Aorta (tissue), 5 donors: ENCODE measurements at regions of chr2 and their contacts with region 1.

Region 1: GRCh38 chr2:229273723-229274338 is 2.7 kb upstream of the PID1 start:
- DNase-seq: peak in 1 of 2 donors; percentile 51
- ATAC-seq: peak; percentile 79
- H3K4me3 ChIP-seq: peak overlapping the region in 1 of 2 donors; percentile 31
- H3K27ac ChIP-seq: no peak overlapping the region
- H3K4me1 ChIP-seq: no peaks in the 10 kb centered on the region
- H3K27me3 ChIP-seq: no peaks in the 10 kb centered on the region

Region 2: GRCh38 chr2:227884511-227884947 is 1389.3 kb before region 1 on chr2:
- intact Hi-C with region 1: loop called in 1 of 2 experiments (anchors 10 kb)
- DNase-seq: peak; percentile 75 to 86
- ATAC-seq: no peak
- H3K4me3 ChIP-seq: no peak overlapping the region
- H3K27ac ChIP-seq: no peak overlapping the region
- H3K4me1 ChIP-seq: peaks cover 1 to 4% of the 10 kb centered on the region in 2 donors
- H3K27me3 ChIP-seq: no peaks in the 10 kb centered on the region

Region 3: DNA sequence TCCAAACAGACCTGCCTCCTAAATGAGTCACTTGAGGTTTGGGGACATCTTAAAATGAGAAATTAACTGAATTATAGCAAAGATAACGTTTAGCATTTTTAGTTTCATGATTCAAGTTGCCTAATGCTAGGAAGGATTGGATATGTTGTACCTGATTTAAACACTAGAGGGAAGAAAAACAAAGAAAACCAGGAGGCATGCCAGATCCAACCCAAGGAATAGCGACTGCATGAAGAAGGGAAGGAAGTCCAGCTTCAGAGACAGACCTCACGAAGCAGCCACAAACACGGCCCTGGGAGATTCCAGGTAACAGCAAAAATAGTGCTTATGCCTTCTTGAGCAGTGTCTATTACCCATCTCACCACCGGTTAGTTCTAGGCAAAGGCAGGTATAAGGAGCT is 592.4 kb before region 1 on chr2:
- intact Hi-C with region 1: loop called (anchors 5 to 10 kb)
- DNase-seq: no peak
- ATAC-seq: peak; percentile 72
- H3K4me3 ChIP-seq: no peak overlapping the region
- H3K27ac ChIP-seq: no peak overlapping the region
- H3K4me1 ChIP-seq: peaks cover 0 to 2% of the 10 kb centered on the region in 2 donors
- H3K27me3 ChIP-seq: no peaks in the 10 kb centered on the region

Region 4: DNA sequence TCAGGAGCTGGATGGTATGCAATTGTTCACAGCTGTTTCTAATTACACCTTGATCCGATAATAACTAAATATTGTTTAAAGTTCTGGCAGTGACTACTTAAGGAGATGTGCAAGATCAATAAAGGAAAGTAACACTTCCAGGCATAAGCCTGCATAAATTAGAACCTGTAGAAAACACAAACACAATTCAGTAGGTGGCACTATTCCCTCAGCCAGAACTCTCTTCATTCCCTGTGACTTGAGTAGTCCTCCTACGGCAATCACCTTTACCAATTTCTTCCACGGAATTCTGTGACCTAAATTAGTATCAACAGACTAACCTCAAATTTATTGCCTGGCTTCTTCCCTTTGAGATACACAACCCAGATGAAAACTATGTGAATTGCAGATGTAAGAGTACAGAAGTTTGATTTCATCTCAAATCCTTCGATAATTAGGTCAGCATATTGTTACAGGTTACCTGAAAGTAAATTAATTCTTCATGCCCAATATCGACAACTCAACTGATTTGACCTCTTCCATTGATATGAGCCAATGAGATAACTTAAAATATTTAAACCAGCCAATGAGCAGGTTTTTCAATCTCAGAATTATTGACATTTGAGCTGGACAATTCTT is 140.6 kb before region 1 on chr2:
- intact Hi-C with region 1: loop called (anchors 2 to 5 kb)
- DNase-seq: no peak
- ATAC-seq: no peak
- H3K4me3 ChIP-seq: no peak overlapping the region
- H3K27ac ChIP-seq: no peak overlapping the region
- H3K4me1 ChIP-seq: peaks cover 3 to 8% of the 10 kb centered on the region in 2 donors
- H3K27me3 ChIP-seq: no peaks in the 10 kb centered on the region

Region 5: GRCh38 chr2:229164545-229165249 is 109.1 kb before region 1 on chr2:
- intact Hi-C with region 1: loop called in 1 of 2 experiments (anchors 5 kb)
- DNase-seq: no peak
- ATAC-seq: no peak
- H3K4me3 ChIP-seq: peak overlapping the region in 1 of 2 donors; percentile 10
- H3K27ac ChIP-seq: peak overlapping the region in 1 of 2 donors; percentile 59
- H3K4me1 ChIP-seq: peaks cover 0 to 27% of the 10 kb centered on the region in 2 donors
- H3K27me3 ChIP-seq: no peaks in the 10 kb centered on the region